Activated CD8-positive, alpha-beta T cell treated with anti-CD3 and anti-CD28 coated beads, Interleukin-2, amount 10 ng/mL, durations not matched to agents 7 days and 5 days (primary cell): ENCODE measurements at regions of chr6 and their contacts with region 1.

Region 1: GRCh38 chr6:73610444-73611275 is 43.1 kb downstream of the SLC17A5 start:
- DNase-seq: no peak
- ATAC-seq: no peak
- H3K4me3 Mint-ChIP-seq: no peak overlapping the region
- H3K27ac Mint-ChIP-seq: no peak overlapping the region
- H3K4me1 Mint-ChIP-seq: no peaks in the 10 kb centered on the region
- H3K27me3 Mint-ChIP-seq: no peaks in the 10 kb centered on the region

Region 2: DNA sequence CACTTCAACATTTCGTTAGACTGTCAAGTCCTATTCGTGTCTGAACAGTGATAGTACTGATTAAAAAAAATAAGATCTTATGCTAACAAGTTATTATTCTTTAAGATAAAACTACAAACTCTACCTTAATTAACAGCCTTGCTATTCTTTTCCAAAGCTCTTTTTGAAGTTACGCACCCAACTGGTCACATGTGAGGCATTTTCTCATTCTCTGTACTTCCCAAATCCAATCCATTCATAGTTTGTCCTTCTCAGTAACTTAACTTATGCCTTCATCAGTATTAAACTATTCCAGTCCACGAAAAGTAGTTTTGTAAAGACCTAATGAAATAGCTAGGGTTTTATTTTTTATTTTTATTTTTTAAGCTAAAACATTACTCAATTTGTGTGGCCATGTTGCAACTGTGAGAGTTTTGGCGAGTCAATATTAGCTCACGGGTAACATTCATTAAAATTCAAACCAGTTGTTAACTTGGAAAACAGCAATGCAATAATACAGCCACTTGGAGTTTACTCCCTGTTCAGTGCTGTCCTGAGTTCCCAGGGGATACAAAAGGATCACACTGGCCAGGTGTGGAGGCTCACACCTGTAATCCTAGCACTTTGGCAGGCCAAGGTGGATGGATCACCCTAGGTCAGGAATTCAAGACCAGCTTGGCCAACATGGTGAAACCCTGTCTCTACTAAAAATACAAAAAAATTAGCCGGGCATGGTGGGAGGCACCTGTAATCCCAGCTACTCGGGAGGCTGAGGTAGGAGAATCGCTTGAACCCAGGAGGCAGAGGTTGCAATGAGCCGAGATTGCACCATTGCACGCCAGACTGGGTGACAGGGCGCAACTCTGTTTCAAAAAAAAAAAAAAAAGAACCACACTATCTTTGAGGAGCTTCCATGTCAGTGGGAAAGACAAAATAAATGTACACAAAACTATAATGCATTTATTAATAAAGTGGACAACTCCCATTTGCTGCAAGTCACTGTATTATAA is 61.9 kb before region 1 on chr6:
- CTCF ChIA-PET with region 1: interaction called, 15 read pairs
- POLR2A ChIA-PET with region 1: no interaction called
- DNase-seq: no peak
- ATAC-seq: no peak
- H3K4me3 Mint-ChIP-seq: no peak overlapping the region
- H3K27ac Mint-ChIP-seq: no peak overlapping the region
- H3K4me1 Mint-ChIP-seq: no peaks in the 10 kb centered on the region
- H3K27me3 Mint-ChIP-seq: no peaks in the 10 kb centered on the region

Region 3: DNA sequence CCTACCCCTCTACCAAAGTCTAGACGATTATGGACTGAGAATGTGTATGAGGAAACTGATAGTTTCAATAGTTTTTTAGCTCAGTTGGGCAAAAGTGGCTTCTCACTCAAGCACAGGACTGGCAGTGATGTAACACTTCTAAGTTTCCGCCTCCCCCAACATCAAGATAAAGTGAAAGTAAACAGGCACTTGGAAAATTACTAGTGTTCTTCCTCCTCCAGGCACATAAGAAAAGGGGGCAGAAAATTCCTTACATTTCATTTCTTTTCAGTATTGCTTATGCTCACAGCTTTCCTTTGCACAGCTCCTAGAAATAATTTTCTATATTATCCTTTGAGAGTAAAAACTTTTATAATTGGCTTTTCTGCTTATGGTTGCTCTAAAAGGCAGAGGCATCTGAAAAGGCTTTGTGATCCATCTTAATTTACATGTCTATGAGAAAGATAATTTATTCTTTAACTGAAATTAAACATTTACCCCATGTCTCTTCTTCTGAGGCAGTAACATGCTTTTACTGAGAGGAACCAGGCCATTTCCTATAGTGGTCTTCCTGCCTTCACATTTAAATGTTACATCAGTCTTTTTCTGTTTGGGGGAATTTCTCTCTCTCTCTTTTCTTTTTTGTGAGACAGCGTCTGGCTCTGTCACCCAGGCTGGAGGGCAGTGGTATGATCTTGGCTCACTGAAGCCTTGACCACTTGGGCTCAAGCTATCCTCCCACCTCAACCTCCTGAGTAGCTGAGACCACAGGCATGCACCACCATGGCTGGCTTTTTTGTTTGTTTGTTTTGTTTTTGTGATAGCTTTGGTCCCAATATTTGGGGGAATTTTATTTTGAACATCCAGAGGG is 24.9 kb before region 1 on chr6:
- CTCF ChIA-PET with region 1: interaction called, 14 read pairs
- POLR2A ChIA-PET with region 1: interaction called, 5 read pairs
- DNase-seq: peak; percentile 70
- ATAC-seq: peak; percentile 81
- H3K4me3 Mint-ChIP-seq: peak overlapping the region; percentile 80
- H3K27ac Mint-ChIP-seq: peak overlapping the region; percentile 99
- H3K4me1 Mint-ChIP-seq: peaks cover 35% of the 10 kb centered on the region
- H3K27me3 Mint-ChIP-seq: no peaks in the 10 kb centered on the region